CD4-positive, alpha-beta memory T cell (primary cell): ENCODE measurements at regions of chr13 and their contacts with region 1.

Region 1: DNA sequence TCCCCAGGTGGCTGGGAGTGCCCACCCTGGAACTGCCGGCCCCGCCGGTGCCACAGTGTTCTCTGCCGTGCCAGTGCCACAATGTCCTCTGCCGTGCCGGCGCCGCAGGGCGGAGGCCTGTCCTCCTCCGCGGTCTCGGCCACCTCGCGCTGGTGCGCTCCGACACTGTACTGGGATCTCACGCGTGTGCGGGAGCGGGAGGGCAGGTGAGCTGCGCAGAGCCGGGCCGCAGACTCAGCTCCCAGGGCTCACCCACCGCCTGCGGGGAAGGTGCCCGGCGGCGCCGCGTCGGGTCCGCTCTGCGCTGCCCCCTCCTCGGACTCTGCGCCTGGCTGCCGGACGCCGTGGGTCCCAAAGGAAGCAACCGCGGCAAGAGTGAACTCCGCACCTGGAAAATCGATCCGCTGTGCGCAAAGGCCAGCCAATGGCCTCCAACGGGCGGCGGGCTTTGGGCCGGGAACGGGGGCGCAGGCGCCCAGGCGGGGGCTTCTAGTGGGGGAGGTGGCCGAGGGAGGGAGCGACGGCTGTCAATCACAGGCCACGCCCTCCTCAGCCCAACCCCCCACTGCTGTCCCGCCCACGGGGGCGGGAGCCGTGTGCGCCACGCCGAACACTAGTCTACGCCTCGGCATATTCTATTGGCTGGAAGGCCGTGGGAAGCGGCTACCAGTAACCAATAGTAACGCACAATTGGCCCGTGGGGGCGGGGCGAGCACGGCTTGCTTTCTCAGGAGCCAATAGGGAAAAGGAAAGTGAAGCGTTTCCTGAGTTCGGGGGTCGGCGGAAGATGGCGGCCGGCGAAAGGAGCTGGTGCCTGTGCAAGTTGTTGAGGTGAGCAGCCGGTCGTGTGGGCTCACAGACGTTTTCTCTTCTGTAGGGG is at the start of gene ALG11:
- DNase-seq: peak; percentile 99
- H3K4me3 ChIP-seq: peak within 1 kb of the TSS; percentile 71 to 92
- H3K4me3 Mint-ChIP-seq: peak within 1 kb of the TSS; percentile 96 to 100 (median 100)
- H3K27ac ChIP-seq: peak within 1 kb of the TSS; percentile 52
- H3K27ac Mint-ChIP-seq: peak within 1 kb of the TSS; percentile 87 to 98 (median 97)
- H3K4me1 ChIP-seq: peaks cover 22% of the 10 kb centered on the region
- H3K4me1 Mint-ChIP-seq: peaks cover 14 to 44% (median 23%) of the 10 kb centered on the region in 4 donors
- H3K27me3 ChIP-seq: peaks cover 8% of the 10 kb centered on the region
- H3K27me3 Mint-ChIP-seq: peaks cover 4 to 24% of the 10 kb centered on the region in 2 donors
- total RNA-seq, gene ALG11: 37.2 to 42.2 TPM

Region 2: DNA sequence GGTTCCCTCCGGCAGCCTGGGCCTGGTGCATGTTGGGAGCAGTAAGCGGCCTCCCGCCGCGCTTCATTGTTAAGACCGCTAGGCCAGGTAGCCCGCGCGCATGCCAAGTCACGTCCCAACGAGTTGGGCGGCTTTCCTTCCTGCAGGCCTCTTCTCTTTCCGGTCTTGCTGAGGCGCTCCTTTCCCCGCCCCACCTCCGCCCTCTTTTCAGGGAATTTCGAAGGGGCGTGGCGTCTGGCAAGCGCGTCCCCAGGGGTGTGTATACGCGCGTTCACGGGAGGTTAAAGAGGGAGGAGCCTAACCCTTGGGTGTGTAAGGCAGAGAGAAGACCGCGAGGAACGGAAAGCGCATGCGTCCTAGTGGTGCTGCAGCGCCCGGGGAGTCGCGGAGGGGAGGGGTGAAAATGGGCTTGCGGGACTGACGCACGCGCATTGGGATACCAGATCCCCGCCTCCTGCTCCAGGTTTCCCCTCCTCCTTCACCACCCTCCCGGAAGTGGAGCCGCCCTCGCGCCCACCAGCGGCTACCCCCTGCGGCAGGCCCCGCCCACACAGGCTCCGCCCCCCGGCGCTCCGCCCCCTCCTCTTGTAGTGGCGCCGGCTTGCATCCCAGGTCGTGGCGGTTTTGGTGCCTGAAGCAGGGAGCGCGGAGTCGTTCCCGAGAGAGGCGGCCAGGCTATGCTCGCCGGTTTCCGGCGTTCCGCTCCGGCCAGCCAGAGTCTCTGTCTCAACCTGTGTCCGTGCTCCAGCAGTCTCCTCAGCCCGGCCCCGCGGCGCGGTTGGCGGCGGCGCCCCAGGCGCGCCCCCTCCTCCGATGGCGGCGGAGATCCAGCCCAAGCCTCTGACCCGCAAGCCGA is 427.8 kb before region 1 on chr13 and contains the start of gene WDFY2:
- CTCF ChIA-PET with region 1: no interaction called
- POLR2A ChIA-PET with region 1: no interaction called
- intact Hi-C with region 1: loop called (anchors 2 kb)
- DNase-seq: peak; percentile 99 to 100 (median 100)
- H3K4me3 ChIP-seq: peak within 1 kb of the TSS; percentile 65 to 92
- H3K4me3 Mint-ChIP-seq: peak within 1 kb of the TSS; percentile 97 to 100 (median 99)
- H3K27ac ChIP-seq: peak within 1 kb of the TSS; percentile 88
- H3K27ac Mint-ChIP-seq: peak within 1 kb of the TSS; percentile 96 to 100 (median 100)
- H3K4me1 ChIP-seq: peaks cover 26% of the 10 kb centered on the region
- H3K4me1 Mint-ChIP-seq: peaks cover 27 to 44% (median 35%) of the 10 kb centered on the region in 4 donors
- H3K27me3 ChIP-seq: no peaks in the 10 kb centered on the region
- H3K27me3 Mint-ChIP-seq: no peaks in the 10 kb centered on the region
- total RNA-seq, gene WDFY2: 20.0 to 21.8 TPM

Region 3: DNA sequence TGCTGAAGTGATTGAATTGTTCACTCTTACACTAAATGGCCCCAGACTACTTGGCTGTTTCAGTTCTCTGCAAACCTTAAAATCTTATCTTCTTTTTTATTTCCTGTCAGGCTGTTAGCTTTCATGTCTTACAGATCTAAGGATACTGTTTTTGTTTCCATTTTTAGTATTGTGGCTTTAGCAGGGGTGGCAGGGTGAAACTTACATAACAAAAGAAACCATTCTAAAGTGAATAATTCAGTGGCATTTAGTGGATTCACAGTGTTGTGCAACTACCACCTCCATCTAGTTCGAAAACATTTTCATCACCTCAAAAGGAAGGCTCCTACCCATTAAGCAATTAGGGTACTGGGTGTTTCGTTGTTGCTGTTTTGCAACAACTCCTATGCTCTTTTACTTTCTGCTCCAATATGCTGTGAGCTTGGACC is 186.7 kb before region 1 on chr13:
- CTCF ChIA-PET with region 1: no interaction called
- POLR2A ChIA-PET with region 1: interaction called, 6 read pairs
- intact Hi-C with region 1: loop called (anchors 5 kb)
- DNase-seq: peak; percentile 57 to 84 (median 79)
- H3K4me3 ChIP-seq: peak overlapping the region; percentile 31 to 56
- H3K4me3 Mint-ChIP-seq: peak overlapping the region; percentile 86 to 95 (median 90)
- H3K27ac ChIP-seq: peak overlapping the region; percentile 65
- H3K27ac Mint-ChIP-seq: peak overlapping the region; percentile 88 to 95 (median 94)
- H3K4me1 ChIP-seq: peaks cover 81% of the 10 kb centered on the region
- H3K4me1 Mint-ChIP-seq: peaks cover 56 to 99% (median 77%) of the 10 kb centered on the region in 4 donors
- H3K27me3 ChIP-seq: no peaks in the 10 kb centered on the region
- H3K27me3 Mint-ChIP-seq: no peaks in the 10 kb centered on the region

Region 4: GRCh38 chr13:51942189-51942588 is 69.7 kb before region 1 on chr13:
- CTCF ChIA-PET with region 1: no interaction called
- POLR2A ChIA-PET with region 1: no interaction called
- intact Hi-C with region 1: loop called (anchors 5 kb)
- DNase-seq: peak; percentile 51 to 64 (median 57)
- H3K4me3 ChIP-seq: peak overlapping the region; percentile 27 to 45
- H3K4me3 Mint-ChIP-seq: peak overlapping the region; percentile 87 to 92 (median 90)
- H3K27ac ChIP-seq: peak overlapping the region; percentile 22
- H3K27ac Mint-ChIP-seq: peak overlapping the region; percentile 77 to 92 (median 88)
- H3K4me1 ChIP-seq: peaks cover 53% of the 10 kb centered on the region
- H3K4me1 Mint-ChIP-seq: peaks cover 43 to 63% (median 56%) of the 10 kb centered on the region in 4 donors
- H3K27me3 ChIP-seq: no peaks in the 10 kb centered on the region
- H3K27me3 Mint-ChIP-seq: peaks cover 0 to 4% of the 10 kb centered on the region in 2 donors

Region 5: GRCh38 chr13:52026246-52026626 is 14.4 kb after region 1 on chr13:
- CTCF ChIA-PET with region 1: no interaction called
- POLR2A ChIA-PET with region 1: no interaction called
- intact Hi-C with region 1: no loop called
- DNase-seq: no peak
- H3K4me3 ChIP-seq: no peak overlapping the region
- H3K4me3 Mint-ChIP-seq: peak overlapping the region in 1 of 8 donors; percentile 24
- H3K27ac ChIP-seq: no peak overlapping the region
- H3K27ac Mint-ChIP-seq: peak overlapping the region in 1 of 7 donors; percentile 70
- H3K4me1 ChIP-seq: peaks cover 4% of the 10 kb centered on the region
- H3K4me1 Mint-ChIP-seq: peaks cover 23 to 40% (median 24%) of the 10 kb centered on the region in 4 donors
- H3K27me3 ChIP-seq: no peaks in the 10 kb centered on the region
- H3K27me3 Mint-ChIP-seq: no peaks in the 10 kb centered on the region

Region 6: DNA sequence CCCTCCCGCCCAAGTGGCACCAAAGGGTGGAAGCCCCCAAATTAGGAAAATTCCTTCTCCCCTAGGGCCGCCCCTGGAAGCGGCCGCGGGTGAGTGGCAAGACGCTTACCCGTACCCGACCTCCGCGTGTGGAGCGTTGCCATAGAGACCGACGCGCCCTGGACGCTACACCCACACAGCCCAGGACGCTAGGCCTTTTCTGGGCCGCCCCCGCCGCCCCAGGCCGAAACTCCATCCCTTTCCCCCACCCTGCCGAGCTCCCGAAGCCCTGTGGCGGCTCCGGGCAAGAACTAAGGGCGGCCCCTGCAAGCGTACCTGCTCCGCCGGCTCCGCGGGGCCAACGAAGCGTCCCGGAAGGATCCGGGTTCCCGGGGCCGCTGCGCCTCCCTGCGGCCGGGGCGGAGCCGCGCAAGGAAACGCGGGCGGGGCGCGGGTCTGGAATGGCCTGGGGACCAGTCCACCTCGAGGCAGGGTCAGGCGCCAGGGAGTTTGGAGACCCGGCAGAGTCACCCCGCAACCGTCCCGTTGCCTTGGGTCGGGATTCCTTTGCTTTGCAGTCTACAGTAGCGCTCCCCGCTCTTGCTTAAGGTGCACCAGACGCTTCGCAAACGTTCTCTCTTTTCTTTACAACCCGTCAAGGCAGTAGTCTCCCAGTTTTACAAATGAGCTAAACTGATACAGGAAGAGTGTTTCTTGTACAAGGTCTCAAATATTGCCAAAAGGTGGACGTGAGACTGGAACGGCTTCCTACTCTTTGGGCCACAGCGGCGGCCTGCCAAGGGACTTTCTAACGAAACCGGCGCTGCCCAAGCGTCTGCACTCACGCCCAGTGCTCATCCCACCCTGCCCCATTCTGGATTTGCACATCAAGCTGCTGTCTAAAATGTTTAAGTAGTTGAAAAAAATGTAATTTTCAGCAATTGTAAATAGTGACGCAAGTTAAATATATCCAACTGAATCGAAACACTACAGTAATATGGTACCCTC is 117.1 kb after region 1 on chr13 and contains the start of gene NEK5:
- CTCF ChIA-PET with region 1: interaction called, 6 read pairs
- POLR2A ChIA-PET with region 1: no interaction called
- intact Hi-C with region 1: loop called (anchors 1 kb)
- DNase-seq: peak; percentile 48 to 58 (median 55)
- H3K4me3 ChIP-seq: peak within 1 kb of the TSS; percentile 59 to 73
- H3K4me3 Mint-ChIP-seq: peak within 1 kb of the TSS; percentile 77 to 95 (median 86)
- H3K27ac ChIP-seq: no peak within 1 kb of the TSS
- H3K27ac Mint-ChIP-seq: peak within 1 kb of the TSS in 6 of 7 donors; percentile 3 to 50 (median 18)
- H3K4me1 ChIP-seq: peaks cover 19% of the 10 kb centered on the region
- H3K4me1 Mint-ChIP-seq: peaks cover 11 to 19% (median 13%) of the 10 kb centered on the region in 4 donors
- H3K27me3 ChIP-seq: peaks cover 4% of the 10 kb centered on the region
- H3K27me3 Mint-ChIP-seq: peaks cover 0 to 3% of the 10 kb centered on the region in 2 donors
- total RNA-seq, gene NEK5: not detected

Region 7: DNA sequence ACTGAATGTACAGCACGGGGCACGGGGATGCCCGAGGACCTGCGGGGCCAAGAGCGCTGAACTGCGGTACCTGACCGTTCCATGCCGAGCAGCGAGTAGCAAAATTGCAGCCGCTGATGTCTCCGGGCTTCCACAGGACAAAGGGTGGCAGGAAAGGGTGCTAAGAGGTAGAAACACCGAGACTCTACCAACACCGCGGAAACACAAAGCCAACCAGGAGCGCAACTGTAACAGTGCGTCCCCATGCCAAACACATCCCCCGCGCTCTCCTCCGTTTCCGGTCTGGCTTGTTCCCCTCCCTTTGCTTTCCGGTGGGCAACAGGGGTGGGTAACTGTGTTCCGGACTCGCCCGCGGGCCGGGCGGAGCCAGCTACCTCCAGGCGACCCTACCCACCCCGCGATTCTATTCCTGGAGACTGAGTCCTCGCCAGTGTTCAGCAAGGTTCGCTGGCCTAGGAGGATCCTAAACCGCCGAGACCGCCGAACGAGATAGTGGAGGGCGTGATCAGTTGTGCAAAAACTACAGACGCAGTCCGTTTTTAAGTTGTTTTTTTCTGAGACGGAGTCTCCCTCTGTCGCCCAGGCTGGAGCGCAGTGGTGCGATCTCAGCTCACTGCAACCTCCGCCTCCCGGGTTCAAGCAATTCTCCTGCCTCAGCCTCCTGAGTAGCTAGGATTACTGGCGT is 182.5 kb after region 1 on chr13:
- CTCF ChIA-PET with region 1: interaction called, 3 read pairs
- POLR2A ChIA-PET with region 1: interaction called, 18 read pairs
- intact Hi-C with region 1: loop called (anchors 1 kb)
- DNase-seq: peak; percentile 84 to 88 (median 85)
- H3K4me3 ChIP-seq: peak overlapping the region; percentile 82 to 94
- H3K4me3 Mint-ChIP-seq: peak overlapping the region; percentile 96 to 99 (median 98)
- H3K27ac ChIP-seq: peak overlapping the region; percentile 68
- H3K27ac Mint-ChIP-seq: peak overlapping the region; percentile 94 to 99 (median 97)
- H3K4me1 ChIP-seq: peaks cover 27% of the 10 kb centered on the region
- H3K4me1 Mint-ChIP-seq: peaks cover 23 to 41% (median 35%) of the 10 kb centered on the region in 4 donors
- H3K27me3 ChIP-seq: no peaks in the 10 kb centered on the region
- H3K27me3 Mint-ChIP-seq: no peaks in the 10 kb centered on the region